Left lung (tissue), 14 donors: ENCODE measurements at regions of chr11 and their contacts with region 1.

Region 1: DNA sequence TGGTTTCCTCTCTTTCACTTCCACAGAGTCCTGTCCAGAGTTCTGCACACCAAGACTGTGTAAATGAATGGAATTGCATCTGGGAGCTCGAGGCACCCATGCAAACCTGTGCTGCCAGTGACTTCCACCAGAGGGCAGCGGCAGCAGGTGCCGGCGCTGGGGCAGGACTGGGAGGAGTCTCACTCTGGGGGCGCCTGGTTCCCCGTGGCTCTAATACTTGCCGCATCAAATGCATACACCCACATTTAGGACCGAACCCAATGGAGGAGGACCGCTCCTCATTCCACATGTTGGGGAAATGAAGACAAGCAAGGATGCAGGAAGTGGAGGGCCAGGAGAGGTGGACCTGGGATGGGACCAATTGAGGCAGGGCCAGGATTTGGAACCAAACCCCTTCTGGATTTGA is 1.1 kb upstream of the CD6 start:
- DNase-seq: peak in 2 of 4 donors; percentile 69 to 91
- ATAC-seq: peak; percentile 92
- H3K4me3 ChIP-seq: no peak overlapping the region
- H3K27ac ChIP-seq: no peak overlapping the region
- H3K4me1 ChIP-seq: peaks cover 0 to 6% of the 10 kb centered on the region in 2 donors
- H3K27me3 ChIP-seq: peaks cover 0 to 14% of the 10 kb centered on the region in 2 donors
- CTCF ChIP-seq: peak; percentile 70 to 93

Region 2: GRCh38 chr11:60700689-60701480 is 269.5 kb before region 1 on chr11:
- intact Hi-C with region 1: no loop called
- DNase-seq: peak in 2 of 4 donors; percentile 37 to 64
- ATAC-seq: peak; percentile 86
- H3K4me3 ChIP-seq: no peak overlapping the region
- H3K27ac ChIP-seq: no peak overlapping the region
- H3K4me1 ChIP-seq: peaks cover 0 to 3% of the 10 kb centered on the region in 2 donors
- H3K27me3 ChIP-seq: no peaks in the 10 kb centered on the region
- CTCF ChIP-seq: peak; percentile 13 to 35

Region 3: DNA sequence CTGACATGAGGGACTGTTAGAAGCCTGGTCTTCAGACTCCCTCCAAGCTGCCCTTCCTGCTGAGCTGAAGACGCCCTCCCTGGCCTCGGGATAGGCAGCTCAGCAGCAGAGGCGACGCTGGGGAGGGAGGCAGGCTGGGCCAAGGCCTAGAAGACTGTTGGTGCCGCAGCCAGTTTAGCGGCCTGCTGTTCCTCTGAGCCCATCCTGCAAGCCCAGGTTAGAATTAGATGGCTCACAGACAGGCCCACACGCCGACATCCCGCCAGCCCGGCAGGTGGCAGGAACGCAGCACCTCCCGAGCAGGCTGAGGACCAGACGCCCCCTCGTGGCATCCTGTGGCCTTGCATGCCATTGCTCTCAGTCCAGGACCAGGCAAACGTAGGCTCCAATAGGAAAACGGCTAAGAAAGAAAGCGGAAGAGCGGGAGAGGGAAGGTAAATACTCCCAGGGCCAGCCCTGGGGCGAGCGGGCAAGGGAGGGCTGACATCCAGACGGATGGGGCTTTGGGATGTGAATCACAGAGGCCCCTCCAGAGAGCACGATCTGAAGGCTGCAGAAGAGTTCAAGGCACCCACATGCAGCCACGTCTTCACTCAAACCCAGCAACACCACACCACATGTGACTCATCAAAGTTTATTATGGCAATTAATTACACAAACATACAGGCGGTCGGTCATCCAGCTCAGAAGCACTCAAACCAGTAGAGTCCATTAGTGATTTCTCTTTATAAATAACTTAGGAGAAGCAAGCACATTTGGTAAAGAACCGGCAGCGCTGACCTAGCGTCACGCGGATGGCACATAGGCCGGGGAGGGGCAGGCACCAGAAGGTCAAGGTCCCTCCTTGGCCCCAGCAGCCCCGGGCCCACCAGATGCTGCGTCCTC is 159.5 kb after region 1 on chr11:
- intact Hi-C with region 1: loop called in 1 of 2 experiments (anchors 2 kb)
- DNase-seq: peak; percentile 74 to 95 (median 89)
- ATAC-seq: peak; percentile 98
- H3K4me3 ChIP-seq: no peak overlapping the region
- H3K27ac ChIP-seq: peak overlapping the region; percentile 1 to 20
- H3K4me1 ChIP-seq: peaks cover 9 to 13% of the 10 kb centered on the region in 2 donors
- H3K27me3 ChIP-seq: no peaks in the 10 kb centered on the region
- CTCF ChIP-seq: peak; percentile 98 to 99